Psoas muscle (tissue), 8 donors: ENCODE measurements at regions of chr15 and their contacts with region 1.

Region 1: DNA sequence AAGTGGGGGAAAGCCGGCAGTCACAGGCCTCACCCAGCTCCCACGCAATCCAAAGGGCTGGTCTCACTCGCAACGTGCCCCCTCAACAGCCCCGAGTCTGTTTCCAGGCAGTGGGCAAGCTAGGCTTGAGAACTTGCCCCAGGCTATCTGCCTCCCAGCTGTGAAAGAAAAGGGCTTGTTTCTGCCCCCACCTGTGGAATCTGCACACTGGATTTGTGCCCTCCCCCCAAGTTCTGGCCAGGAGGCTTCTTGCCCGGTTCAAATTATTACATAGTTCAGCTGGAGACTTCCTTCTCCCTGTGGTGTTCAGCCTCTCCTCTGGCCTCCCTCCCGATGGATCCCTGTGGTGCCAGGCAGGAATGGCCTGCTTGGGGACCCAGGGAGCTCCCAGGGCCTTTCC is 283.9 kb upstream of the LYSMD4 start:
- DNase-seq: no peak
- ATAC-seq: no peak
- H3K4me3 ChIP-seq: no peak overlapping the region
- H3K27ac ChIP-seq: no peak overlapping the region
- H3K4me1 ChIP-seq: no peaks in the 10 kb centered on the region
- H3K27me3 ChIP-seq: no peaks in the 10 kb centered on the region
- CTCF ChIP-seq: no peak

Region 2: GRCh38 chr15:99997112-99997651 is 20.0 kb before region 1 on chr15:
- intact Hi-C with region 1: loop called in 1 of 2 experiments (anchors 2 kb)
- DNase-seq: peak in 1 of 2 donors; percentile 36
- ATAC-seq: no peak
- H3K4me3 ChIP-seq: no peak overlapping the region
- H3K27ac ChIP-seq: no peak overlapping the region
- H3K4me1 ChIP-seq: no peaks in the 10 kb centered on the region
- H3K27me3 ChIP-seq: no peaks in the 10 kb centered on the region
- CTCF ChIP-seq: no peak